ENCODE measurements at regions of chr7 and their contacts with region 1.

Region 1: DNA sequence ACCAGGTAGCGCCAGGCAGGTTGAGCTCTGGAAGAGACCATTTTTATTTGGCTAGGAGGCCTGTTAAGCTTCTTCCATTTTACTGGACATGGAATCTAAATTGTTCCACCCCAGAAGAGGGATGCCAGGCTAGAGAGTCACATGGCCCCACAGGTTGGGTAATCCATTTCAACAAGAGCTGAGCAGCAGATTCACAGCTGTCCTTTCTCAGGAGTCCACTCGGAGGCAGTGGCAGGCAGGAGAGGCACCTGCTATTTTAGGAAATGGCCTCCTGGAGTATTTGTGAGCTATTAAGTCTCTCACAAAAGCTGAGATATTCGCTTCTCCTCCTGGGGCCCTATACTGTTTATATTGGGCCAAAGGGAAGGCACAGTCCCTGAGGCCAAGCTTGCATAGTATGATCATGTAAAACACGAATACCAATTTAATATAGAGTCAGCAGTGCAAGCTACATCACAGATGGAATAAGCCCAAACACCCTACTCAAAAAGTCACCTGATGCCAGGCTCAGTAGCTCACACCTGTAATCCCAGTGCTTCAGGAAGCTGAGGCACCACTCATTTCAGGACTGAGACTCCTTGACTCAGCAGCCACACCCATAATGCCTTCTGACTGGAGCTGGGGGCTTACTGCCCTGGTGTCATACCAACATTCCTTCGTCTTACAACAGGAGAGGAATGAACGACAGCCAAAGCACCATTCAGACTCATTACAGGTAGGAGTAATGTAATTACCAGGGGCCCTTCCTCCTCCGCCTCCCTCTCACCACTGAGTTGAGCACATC is 124.1 kb downstream of the LMBR1 start:
- DNase-seq: no peak
- H3K4me3 ChIP-seq: no peak overlapping the region
- H3K27ac ChIP-seq: no peak overlapping the region
- H3K4me1 ChIP-seq: peaks cover 0 to 4% (median 2%) of the 10 kb centered on the region in 4 experiments; a peak in 3 of 7 replicates
- H3K27me3 ChIP-seq: no peaks in the 10 kb centered on the region
- CTCF ChIP-seq: peak; percentile 21 to 43 (median 30)
- EP300 ChIP-seq: no peak
- POLR2A ChIP-seq: no peak
- RAD21 ChIP-seq: peak; percentile 36 to 47

Region 2: GRCh38 chr7:156582591-156583123 is 186.2 kb before region 1 on chr7:
- CTCF ChIA-PET with region 1: no interaction called
- POLR2A ChIA-PET with region 1: no interaction called
- DNase-seq: no peak
- H3K4me3 ChIP-seq: no peak overlapping the region
- H3K27ac ChIP-seq: no peak overlapping the region
- H3K4me1 ChIP-seq: peaks cover 0 to 19% (median 14%) of the 10 kb centered on the region in 4 experiments; a peak in 6 of 7 replicates
- H3K27me3 ChIP-seq: peaks cover 0 to 11% (median 9%) of the 10 kb centered on the region in 4 experiments; a peak in 4 of 7 replicates
- CTCF ChIP-seq: no peak
- EP300 ChIP-seq: no peak
- POLR2A ChIP-seq: no peak
- RAD21 ChIP-seq: peak in 1 of 2 experiments; percentile 23; a peak in 1 of 4 replicates

Region 3: DNA sequence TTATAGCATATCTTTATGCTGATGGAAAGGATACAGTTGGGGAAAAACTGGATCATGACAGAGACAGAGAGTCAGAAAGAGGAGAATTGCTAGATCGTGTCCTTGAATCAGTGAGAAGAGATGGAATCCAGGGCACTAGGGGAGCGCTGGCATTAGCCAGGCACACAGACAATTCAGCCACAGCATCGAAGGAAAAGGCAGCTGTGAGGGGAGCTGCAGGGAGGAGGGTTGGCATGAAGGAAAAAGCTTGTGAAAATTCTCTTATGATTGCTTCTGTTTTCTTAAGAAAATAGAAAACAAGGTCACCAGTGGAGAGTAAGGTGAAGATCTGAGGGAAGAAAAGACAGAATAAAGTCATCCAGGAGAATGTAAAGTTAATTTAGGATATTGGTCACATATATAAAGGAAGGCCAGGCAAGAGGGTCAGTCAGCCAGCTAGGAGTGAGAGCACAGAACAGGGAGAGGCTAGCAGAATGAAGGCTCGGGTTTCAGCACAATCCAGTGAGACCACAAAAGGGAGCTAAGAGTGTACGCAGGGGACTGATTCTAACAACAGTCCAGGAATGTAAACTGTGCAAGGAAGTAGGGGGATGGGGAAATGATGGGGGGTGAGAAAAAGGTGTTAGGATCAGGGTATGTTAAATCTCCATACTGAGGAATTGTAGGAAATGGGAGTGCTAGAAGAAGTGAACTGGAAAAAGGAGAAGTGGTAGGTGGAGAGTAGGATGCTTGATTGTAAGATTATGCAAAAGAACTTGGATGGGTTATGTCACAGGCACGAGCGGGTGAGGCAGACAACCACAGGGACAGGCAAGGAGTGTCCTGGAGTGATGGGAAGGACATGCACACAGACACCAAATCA is 16.3 kb before region 1 on chr7:
- CTCF ChIA-PET with region 1: interaction called, 12 read pairs
- POLR2A ChIA-PET with region 1: interaction called, 3 read pairs
- DNase-seq: no peak
- H3K4me3 ChIP-seq: no peak overlapping the region
- H3K27ac ChIP-seq: no peak overlapping the region
- H3K4me1 ChIP-seq: peaks cover 2 to 8% (median 3%) of the 10 kb centered on the region in 4 experiments; a peak in 4 of 7 replicates
- H3K27me3 ChIP-seq: no peaks in the 10 kb centered on the region
- CTCF ChIP-seq: no peak
- EP300 ChIP-seq: no peak
- POLR2A ChIP-seq: no peak
- RAD21 ChIP-seq: no peak

Measured in H1 (cell line).